Psoas muscle (tissue), 8 donors: ENCODE measurements at regions of chr17 and their contacts with region 1.

Region 1: GRCh38 chr17:3859940-3860339 is 13.9 kb upstream of the NCBP3 start:
- DNase-seq: no peak
- ATAC-seq: no peak
- H3K4me3 ChIP-seq: no peak overlapping the region
- H3K27ac ChIP-seq: no peak overlapping the region
- H3K4me1 ChIP-seq: no peaks in the 10 kb centered on the region
- H3K27me3 ChIP-seq: peaks cover 0 to 1% (median 0%) of the 10 kb centered on the region in 3 donors
- CTCF ChIP-seq: no peak

Region 2: DNA sequence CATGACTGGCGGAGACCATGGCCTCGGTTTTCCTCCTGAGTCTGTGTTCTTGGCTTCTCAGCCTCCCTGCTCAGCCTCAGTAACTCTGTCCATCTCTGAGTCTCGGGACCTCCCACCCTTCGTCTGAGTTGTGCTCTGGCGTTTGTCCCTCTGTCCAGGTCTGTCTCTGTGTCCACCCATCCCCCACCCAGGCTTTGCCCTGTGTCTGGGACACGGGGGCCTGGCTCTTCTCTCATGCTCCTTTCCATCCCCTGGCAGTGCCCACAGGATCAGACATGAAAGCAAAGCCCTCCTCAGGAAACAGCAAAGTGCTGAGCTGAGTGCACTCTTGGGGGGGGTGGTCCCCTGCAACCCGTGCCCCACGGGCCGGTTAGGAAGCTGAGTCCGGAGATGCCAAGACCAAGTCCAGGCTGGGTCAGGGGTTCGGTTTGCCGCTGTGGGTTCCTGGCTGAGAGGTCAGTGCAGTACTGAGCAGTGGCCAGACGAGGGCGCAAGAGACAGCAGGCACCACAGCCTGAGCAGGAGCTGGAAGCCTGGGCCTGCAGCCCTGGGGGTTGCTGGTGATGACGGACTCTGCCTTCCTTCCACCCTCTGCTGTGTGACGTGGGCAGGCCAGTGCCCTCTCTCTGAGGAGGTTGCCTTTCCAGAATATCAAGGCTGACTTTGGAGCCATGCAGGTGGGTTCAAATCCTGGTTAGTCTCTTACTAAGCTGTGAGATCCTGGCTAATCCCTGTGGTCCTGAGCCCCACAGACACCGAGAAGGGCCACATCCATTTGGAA is 53.8 kb after region 1 on chr17:
- intact Hi-C with region 1: loop called in 1 of 2 experiments (anchors 5 kb)
- DNase-seq: peak; percentile 79 to 87
- ATAC-seq: peak; percentile 85 to 91 (median 89)
- H3K4me3 ChIP-seq: no peak overlapping the region
- H3K27ac ChIP-seq: no peak overlapping the region
- H3K4me1 ChIP-seq: peaks cover 4% of the 10 kb centered on the region
- H3K27me3 ChIP-seq: no peaks in the 10 kb centered on the region
- CTCF ChIP-seq: peak; percentile 95

Region 3: GRCh38 chr17:4607773-4608187 is 747.8 kb after region 1 on chr17:
- intact Hi-C with region 1: no loop called
- DNase-seq: peak; percentile 73 to 81
- ATAC-seq: no peak
- H3K4me3 ChIP-seq: peak overlapping the region; percentile 5
- H3K27ac ChIP-seq: peak overlapping the region; percentile 84
- H3K4me1 ChIP-seq: peaks cover 71% of the 10 kb centered on the region
- H3K27me3 ChIP-seq: no peaks in the 10 kb centered on the region
- CTCF ChIP-seq: no peak